Gastrocnemius medialis (tissue), 4 donors: ENCODE measurements at regions of chr16 and their contacts with region 1.

Region 1: GRCh38 chr16:71499775-71500364 is 10.7 kb upstream of the ZNF19 start:
- DNase-seq: peak in 1 of 2 donors; percentile 3
- ATAC-seq: peak; percentile 56 to 63
- H3K4me3 ChIP-seq: no peak overlapping the region
- H3K27ac ChIP-seq: no peak overlapping the region
- H3K4me1 ChIP-seq: no peaks in the 10 kb centered on the region
- H3K27me3 ChIP-seq: peaks cover 5 to 6% (median 5%) of the 10 kb centered on the region in 3 donors
- CTCF ChIP-seq: peak; percentile 23 to 65 (median 55)
- POLR2A ChIP-seq: no peak

Region 2: DNA sequence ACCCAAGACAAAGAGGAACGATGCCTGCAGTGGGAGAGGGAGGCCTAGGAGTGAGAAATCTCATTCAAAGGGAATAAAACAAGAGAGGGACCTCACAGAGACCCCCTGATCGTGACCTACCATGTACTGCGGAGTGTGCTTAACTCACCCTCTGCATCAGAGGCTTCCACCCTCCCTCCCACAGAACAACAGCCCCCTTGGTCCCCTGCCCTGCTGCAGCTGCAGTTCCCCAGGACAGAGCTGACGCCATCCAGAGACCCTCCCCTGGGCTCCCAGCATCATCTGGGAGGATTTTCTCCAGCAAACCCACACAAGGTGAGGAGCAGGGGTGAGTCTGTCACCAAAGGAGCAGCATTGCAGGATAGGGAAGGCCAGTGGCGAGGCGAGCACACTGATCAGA is 97.9 kb before region 1 on chr16:
- in situ Hi-C with region 1: no loop called
- intact Hi-C with region 1: no loop called
- DNase-seq: no peak
- ATAC-seq: no peak
- H3K4me3 ChIP-seq: no peak overlapping the region
- H3K27ac ChIP-seq: no peak overlapping the region
- H3K4me1 ChIP-seq: no peaks in the 10 kb centered on the region
- H3K27me3 ChIP-seq: peaks cover 0 to 2% (median 0%) of the 10 kb centered on the region in 3 donors
- CTCF ChIP-seq: no peak
- POLR2A ChIP-seq: no peak

Region 3: DNA sequence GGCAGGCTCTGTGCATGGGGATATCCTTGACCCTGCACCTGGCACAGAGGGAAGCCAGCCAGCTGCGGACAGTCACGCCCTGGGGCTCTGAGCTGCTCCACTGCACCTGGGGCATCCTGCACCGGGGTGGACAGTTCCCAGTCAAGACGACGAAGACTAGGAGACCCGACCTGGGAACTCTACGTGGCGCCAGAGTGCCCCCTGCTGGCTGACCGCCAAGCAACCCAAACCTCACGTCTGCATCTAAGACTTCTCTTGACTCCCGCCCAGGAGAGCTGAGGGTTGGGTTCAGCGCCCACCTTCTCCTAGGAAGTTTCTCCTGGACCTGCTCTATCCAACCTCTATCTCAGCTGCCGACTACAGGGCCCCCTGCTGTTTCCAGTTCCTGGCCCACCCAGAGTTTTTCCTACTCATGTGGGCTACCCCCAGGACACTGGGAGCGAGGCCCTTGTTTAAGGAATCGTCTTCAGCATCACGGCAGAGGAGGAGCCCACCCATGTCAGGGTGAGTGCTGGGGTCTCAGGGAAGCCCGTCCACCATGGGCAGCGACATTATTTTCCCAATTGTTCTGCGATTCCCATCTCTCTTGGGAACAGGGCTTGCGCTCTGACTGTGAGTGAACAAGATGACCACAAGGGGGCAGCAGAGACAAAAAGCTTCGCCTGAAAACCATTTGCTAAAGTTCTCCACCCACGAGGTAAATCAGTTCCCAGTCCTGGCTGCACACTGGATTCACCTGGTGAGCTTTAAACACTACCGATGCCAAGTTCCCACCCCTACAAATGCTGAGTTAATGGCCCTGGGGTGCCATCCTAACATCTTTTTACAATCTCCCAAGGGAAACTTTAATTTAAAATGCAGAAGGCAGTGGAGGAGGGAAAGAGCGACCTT is 87.4 kb before region 1 on chr16:
- in situ Hi-C with region 1: loop called (anchors 5 to 10 kb)
- intact Hi-C with region 1: loop called (anchors 1 kb)
- DNase-seq: peak; percentile 26 to 43
- ATAC-seq: peak; percentile 62 to 81
- H3K4me3 ChIP-seq: no peak overlapping the region
- H3K27ac ChIP-seq: no peak overlapping the region
- H3K4me1 ChIP-seq: no peaks in the 10 kb centered on the region
- H3K27me3 ChIP-seq: peaks cover 0 to 4% (median 3%) of the 10 kb centered on the region in 3 donors
- CTCF ChIP-seq: peak; percentile 49 to 87 (median 79)
- POLR2A ChIP-seq: no peak

Region 4: DNA sequence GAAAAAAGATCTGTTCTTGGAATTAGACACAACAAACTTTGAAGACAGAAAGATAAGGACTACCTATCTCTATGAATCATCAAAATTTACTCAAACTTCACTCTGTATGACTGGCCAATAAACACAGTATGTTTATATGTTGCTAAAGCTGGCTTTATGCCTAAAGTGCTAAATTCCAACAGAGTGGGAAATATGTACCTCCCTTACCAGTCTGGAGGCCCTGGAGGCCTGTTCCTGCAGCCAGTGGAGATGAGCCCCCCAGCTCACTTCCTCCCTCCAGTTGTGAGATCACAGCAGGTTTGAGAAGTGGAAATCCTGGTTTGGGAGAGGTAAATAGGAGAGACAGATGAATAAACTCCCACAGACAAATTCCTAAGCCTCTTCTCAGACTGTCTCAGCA is 46.8 kb before region 1 on chr16:
- in situ Hi-C with region 1: no loop called
- intact Hi-C with region 1: loop called (anchors 5 kb)
- DNase-seq: no peak
- ATAC-seq: no peak
- H3K4me3 ChIP-seq: no peak overlapping the region
- H3K27ac ChIP-seq: no peak overlapping the region
- H3K4me1 ChIP-seq: no peaks in the 10 kb centered on the region
- H3K27me3 ChIP-seq: peaks cover 0 to 7% (median 0%) of the 10 kb centered on the region in 3 donors
- CTCF ChIP-seq: no peak
- POLR2A ChIP-seq: no peak

Region 5: DNA sequence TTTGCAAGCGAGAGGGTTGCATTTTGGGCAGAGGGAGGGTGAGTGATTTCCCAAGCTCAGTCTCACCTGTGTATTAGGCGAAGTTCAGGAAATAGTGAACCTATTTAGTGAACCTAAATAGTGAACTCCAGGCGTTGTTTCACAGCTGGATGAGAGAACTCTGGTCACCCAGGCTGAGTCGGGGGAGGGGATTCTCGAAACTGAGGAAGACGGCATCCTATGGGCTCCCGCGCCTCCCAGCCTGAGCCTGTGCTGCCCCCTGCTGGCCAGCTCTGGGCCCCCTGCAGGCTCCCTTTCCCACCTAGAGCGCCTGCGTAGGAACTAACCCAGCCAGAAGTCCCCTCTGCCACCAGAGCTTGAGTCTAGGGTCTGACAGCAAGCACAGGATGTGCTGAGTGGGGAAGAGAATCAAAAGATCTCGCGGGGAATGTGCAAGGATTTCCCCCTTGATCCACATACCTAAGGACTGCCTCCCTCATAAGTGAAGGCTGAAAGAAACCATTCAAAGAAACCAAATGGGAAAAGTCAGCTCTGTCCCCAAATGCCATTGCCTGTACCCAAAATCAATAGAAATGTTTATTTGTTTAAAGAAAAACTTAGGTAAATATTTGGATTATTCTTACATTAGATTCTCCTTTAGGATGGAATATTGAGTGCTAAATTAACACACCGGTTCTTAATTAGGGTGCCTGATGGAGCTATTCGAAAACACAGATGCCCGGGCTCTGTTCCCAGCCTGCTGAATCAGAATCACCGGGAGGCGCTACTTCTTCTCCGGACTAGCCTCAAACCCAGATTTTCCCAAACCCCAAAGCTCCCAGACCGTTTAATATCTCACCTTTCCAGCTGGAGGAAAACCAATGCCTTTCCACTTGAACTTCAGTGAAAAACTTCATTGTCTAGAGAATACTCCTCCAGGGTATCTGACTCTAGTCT is 111.3 kb after region 1 on chr16:
- in situ Hi-C with region 1: loop called in 1 of 4 experiments (anchors 25 kb)
- intact Hi-C with region 1: no loop called
- DNase-seq: no peak
- ATAC-seq: no peak
- H3K4me3 ChIP-seq: no peak overlapping the region
- H3K27ac ChIP-seq: no peak overlapping the region
- H3K4me1 ChIP-seq: no peaks in the 10 kb centered on the region
- H3K27me3 ChIP-seq: peaks cover 0 to 10% (median 3%) of the 10 kb centered on the region in 3 donors
- CTCF ChIP-seq: peak; percentile 22 to 63 (median 47)
- POLR2A ChIP-seq: no peak